Dendritic cell treated with granulocyte-macrophage colony-stimulating factor and Interleukin-4, amounts not matched to agents 40 ng/mL and 50 ng/mL, for 4 days (primary cell): ENCODE measurements at regions of chr11 and their contacts with region 1.

Region 1: GRCh38 chr11:61792310-61793085 is at the starts of genes FEN1 and TMEM258:
- H3K4me3 Mint-ChIP-seq: peak within 1 kb of the TSS; percentile 92
- H3K27ac Mint-ChIP-seq: peak within 1 kb of the TSS; percentile 100
- H3K4me1 Mint-ChIP-seq: peaks cover 41% of the 10 kb centered on the region
- H3K27me3 Mint-ChIP-seq: no peaks in the 10 kb centered on the region

Region 2: GRCh38 chr11:61816736-61817455 is 24.4 kb after region 1 on chr11 and contains the start of gene FADS1:
- intact Hi-C with region 1: loop called (anchors 1 kb)
- H3K4me3 Mint-ChIP-seq: peak within 1 kb of the TSS; percentile 92
- H3K27ac Mint-ChIP-seq: peak within 1 kb of the TSS; percentile 94
- H3K4me1 Mint-ChIP-seq: peaks cover 36% of the 10 kb centered on the region
- H3K27me3 Mint-ChIP-seq: no peaks in the 10 kb centered on the region

Region 3: GRCh38 chr11:61947486-61948210 is 155.2 kb after region 1 on chr11:
- intact Hi-C with region 1: loop called (anchors 2 kb)
- H3K4me3 Mint-ChIP-seq: no peak overlapping the region
- H3K27ac Mint-ChIP-seq: peak overlapping the region; percentile 27
- H3K4me1 Mint-ChIP-seq: peaks cover 26% of the 10 kb centered on the region
- H3K27me3 Mint-ChIP-seq: peaks cover 14% of the 10 kb centered on the region

Region 4: DNA sequence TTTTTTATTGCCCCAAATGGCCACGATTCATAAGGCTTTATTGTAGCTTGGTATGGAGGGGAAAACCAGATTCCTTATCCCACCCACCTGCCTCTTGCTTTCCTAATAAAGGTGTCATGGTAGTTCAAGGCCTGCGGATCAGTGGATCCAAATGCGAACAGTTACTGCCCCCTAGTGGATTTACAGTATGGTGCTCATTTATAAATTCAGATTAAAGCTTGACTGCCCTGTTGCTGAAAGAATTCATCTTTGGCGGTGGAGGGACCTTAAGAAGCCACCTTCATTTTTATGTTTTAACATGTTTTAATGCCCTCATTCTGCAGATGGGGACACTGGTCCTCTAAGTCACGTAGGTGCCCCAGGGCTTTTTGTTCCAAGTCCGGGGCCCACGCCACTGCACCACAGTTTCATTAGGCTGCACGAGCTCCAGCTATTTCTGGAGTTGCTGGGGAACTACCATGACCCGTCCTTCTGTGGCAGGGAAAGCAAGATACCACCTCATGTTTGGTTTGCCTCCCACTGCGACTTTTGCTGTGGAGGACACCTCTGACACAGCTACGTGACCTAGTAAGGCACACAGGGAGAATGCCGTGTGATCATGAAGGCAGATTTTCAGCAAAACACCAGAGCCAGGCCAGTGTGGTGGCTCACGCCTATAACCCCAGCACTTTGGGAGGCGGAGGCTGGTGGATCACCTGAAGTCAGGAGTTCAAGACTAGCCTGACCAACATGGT is 315.7 kb after region 1 on chr11:
- intact Hi-C with region 1: loop called (anchors 2 kb)
- H3K4me3 Mint-ChIP-seq: no peak overlapping the region
- H3K27ac Mint-ChIP-seq: no peak overlapping the region
- H3K4me1 Mint-ChIP-seq: peaks cover 18% of the 10 kb centered on the region
- H3K27me3 Mint-ChIP-seq: peaks cover 12% of the 10 kb centered on the region

Region 5: DNA sequence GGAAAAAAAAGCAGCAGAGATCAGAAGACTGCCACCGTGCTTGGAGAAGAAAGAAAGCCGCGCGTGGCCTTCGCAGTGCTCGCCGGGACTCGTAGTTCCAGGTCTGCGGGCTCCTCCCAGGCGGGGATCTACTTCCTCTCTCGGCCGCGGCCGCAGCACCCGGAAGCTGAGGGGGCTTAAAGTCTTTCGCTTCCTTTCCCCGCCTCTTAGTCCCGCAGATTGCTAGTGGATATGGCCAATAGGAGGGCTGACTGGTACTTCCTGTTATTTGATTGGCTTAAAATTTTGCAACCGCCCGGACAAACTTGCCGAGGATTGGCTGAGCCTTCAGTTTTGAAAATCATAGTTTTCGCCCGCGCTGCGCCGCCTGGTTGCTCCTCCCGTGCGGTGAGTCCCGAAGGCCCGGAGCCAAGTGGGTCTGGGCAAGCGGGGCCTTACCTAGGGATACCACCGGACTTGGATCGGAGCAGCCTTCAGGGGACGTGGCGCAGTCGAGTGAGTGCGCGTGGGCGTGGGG is 331.2 kb after region 1 on chr11 and contains the start of gene INCENP:
- intact Hi-C with region 1: loop called (anchors 5 kb)
- H3K4me3 Mint-ChIP-seq: peak within 1 kb of the TSS; percentile 95
- H3K27ac Mint-ChIP-seq: peak within 1 kb of the TSS; percentile 93
- H3K4me1 Mint-ChIP-seq: peaks cover 25% of the 10 kb centered on the region
- H3K27me3 Mint-ChIP-seq: no peaks in the 10 kb centered on the region

Region 6: DNA sequence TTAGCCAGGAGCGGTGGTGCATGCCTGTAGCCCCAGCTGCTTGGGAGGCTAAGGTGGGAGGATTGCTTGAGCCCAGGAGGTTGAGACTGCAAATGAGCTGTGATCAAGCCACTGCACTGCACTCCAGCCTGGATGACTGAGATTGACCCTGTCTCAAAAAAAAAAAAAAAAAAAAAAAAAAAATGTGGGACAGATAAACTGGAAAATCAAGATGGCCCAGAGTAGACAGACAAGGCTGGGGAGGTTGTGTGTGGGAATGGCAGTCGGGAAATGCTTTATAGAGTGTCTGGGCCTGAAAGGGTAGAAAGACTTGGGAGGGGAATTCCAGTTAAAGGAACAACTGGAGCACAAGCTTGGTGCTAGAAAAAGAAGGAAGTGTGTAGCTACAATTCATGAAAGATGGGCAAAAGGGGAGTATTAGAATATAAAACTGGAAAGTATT is 1065.1 kb after region 1 on chr11:
- intact Hi-C with region 1: no loop called
- H3K4me3 Mint-ChIP-seq: peak overlapping the region; percentile 98
- H3K27ac Mint-ChIP-seq: peak overlapping the region; percentile 95
- H3K4me1 Mint-ChIP-seq: peaks cover 64% of the 10 kb centered on the region
- H3K27me3 Mint-ChIP-seq: no peaks in the 10 kb centered on the region